ENCODE measurements at regions of chr15 and their contacts with region 1.

Region 1: DNA sequence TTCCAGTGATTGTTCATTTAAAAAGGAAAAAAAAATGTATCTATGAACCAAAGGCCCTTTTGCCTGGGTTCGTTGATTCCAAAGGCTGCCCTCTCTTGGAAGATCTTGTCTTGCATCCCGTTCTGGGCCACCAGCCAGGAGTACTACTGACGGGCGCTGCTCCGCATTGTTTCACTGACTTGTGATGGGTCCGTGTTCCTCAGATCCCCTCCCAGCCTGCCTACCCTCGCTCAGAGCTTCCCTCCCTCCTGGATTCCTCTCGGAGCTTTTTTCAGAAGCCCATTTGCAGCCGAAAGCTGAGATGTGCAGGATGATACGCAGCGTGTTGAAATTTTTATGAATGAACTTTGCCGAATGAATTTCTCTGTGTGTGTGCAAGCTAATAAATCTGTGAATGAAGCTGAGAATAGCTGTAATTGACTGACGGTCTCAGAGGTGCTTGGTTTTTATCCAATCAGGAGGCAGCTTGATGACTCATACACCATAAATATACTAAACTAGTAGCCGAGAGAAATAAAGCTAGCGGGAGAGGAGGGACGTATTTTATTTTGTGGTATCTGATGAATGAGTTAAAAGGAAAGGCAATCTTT is at the start of gene SHC4:
- DNase-seq: peak; percentile 86
- H3K4me3 ChIP-seq: peak within 1 kb of the TSS; percentile 57 to 69 (median 58)
- H3K27ac ChIP-seq: peak within 1 kb of the TSS; percentile 43
- H3K4me1 ChIP-seq: peaks cover 44% of the 10 kb centered on the region
- H3K27me3 ChIP-seq: no peaks in the 10 kb centered on the region
- CTCF ChIP-seq: peak; percentile 6 to 49
- total RNA-seq, gene SHC4: 5.5 to 23.8 TPM

Region 2: DNA sequence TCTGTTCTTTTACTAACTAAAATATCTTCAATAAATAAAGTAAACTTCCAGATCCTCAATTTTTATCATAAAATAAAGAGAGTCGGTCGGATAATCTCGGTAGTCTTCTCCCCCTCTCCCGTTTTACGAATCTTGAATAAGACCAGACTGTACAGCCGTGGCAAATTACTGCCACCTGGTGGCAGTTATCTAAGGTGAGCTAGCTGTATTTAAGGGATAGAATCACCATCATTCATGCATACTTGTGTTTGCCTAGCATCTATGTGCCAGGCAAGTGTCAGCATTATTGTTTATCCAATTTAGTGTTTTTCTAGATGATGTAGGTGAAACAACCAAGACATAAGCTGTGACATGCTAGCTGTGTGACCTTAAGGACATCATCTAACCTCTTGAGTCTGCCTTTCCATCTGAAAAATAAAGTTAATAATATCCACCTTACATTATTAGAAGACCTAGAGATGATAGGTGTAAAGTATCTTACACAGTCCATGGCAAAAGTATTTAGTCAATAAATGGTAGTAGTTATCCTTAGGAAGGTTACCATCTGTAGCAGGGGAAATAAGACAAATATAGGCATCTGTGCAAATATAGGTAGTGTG is 611.0 kb before region 1 on chr15:
- CTCF ChIA-PET with region 1: no interaction called
- dilution Hi-C with region 1: no loop called
- in situ Hi-C with region 1: loop called in 1 of 2 experiments (anchors 25 kb)
- intact Hi-C with region 1: loop called (anchors 5 kb)
- DNase-seq: peak; percentile 47
- H3K4me3 ChIP-seq: no peak overlapping the region
- H3K27ac ChIP-seq: no peak overlapping the region
- H3K4me1 ChIP-seq: no peaks in the 10 kb centered on the region
- H3K27me3 ChIP-seq: no peaks in the 10 kb centered on the region
- CTCF ChIP-seq: peak; percentile 78 to 84

Region 3: DNA sequence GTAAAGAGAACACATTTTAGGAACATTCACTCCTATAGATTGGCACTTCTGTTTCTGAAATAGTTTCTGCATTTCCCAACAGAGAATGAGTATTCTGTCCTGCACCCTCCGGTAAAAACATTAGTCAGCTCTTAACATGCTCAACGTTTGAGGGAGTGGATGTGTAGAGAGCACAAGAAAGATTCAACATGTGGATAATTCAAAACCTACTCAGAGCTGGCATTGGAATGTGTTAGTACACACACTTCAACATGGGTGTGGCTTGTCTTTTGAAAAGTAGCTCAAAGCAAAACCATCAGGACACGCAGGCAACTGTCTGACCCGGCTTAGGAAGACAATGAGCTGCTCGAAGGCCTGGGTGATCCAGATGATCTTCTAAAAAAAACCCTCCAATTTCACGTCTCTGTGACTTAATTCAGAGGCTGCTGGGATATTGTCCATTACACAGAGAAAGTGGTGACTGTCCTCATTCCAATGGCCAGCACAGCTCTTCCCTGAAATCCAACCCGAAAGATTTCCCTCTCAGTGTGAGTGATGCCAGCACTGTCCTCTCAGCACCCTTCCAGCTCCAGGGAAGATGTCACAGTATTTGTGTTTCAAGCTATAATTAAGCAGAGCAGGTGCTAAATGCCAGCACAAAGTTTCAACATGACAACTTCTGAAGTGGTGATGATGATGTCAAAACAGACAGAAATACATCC is 336.2 kb before region 1 on chr15:
- CTCF ChIA-PET with region 1: interaction called, 4 read pairs
- dilution Hi-C with region 1: no loop called
- in situ Hi-C with region 1: no loop called
- intact Hi-C with region 1: loop called (anchors 5 kb)
- DNase-seq: peak; percentile 82
- H3K4me3 ChIP-seq: no peak overlapping the region
- H3K27ac ChIP-seq: peak overlapping the region; percentile 27
- H3K4me1 ChIP-seq: peaks cover 6% of the 10 kb centered on the region
- H3K27me3 ChIP-seq: no peaks in the 10 kb centered on the region
- CTCF ChIP-seq: no peak

Region 4: DNA sequence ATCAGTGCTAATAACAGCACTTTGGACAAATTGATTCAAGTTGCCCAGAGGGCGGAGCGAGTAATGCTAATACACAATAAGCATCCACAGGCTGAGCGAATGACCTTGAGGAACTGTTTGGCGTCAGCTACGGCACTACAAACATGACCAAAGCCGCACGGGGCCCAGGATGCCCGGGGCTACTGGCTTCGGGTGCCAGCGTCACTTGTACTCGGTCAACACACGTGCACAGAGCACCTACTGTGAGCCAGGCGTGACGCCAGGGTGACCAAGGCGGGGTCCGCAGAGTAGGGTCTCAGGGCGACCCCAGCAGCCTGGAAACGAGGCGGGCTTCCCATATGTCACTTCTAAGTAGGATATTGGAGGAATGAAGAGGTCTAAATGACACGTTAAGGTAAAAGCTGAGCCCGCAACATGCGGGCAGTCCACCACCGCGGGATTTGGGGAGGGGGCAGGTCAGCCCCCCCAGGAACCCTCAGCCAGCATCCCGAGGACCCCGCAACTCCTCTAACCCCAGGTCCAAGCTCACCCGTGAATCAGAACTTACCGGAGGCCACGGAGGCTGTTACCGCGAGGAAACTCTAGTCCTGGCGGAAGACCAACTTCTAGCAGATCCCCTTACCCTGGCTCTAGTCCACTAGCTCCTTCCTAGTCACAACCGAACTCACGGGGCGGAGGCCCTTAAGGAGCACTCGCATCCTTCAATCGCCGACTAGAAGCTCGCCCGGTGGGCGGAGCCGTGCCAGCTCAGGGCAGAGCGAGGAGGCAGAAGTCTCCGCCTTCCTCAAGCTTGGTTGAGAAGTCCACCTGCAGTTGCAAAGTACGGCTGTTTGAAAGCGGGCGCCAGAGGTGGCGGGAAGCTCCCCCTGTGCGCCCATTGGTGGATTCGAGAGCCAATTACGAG is 153.0 kb before region 1 on chr15 and contains the start of gene CEP152:
- CTCF ChIA-PET with region 1: no interaction called
- dilution Hi-C with region 1: no loop called
- in situ Hi-C with region 1: no loop called
- intact Hi-C with region 1: loop called (anchors 2 kb)
- DNase-seq: peak; percentile 100
- H3K4me3 ChIP-seq: peak within 1 kb of the TSS; percentile 84 to 93 (median 88)
- H3K27ac ChIP-seq: peak within 1 kb of the TSS; percentile 89
- H3K4me1 ChIP-seq: peaks cover 12% of the 10 kb centered on the region
- H3K27me3 ChIP-seq: no peaks in the 10 kb centered on the region
- CTCF ChIP-seq: no peak
- total RNA-seq, gene CEP152: 2.5 to 9.2 TPM

Region 5: GRCh38 chr15:48877630-48878595 is 85.7 kb before region 1 on chr15 and contains the start of gene EID1:
- CTCF ChIA-PET with region 1: interaction called, 5 read pairs
- dilution Hi-C with region 1: no loop called
- in situ Hi-C with region 1: no loop called
- intact Hi-C with region 1: loop called (anchors 1 kb)
- DNase-seq: peak; percentile 95
- H3K4me3 ChIP-seq: peak within 1 kb of the TSS; percentile 47 to 96 (median 75)
- H3K27ac ChIP-seq: peak within 1 kb of the TSS; percentile 68
- H3K4me1 ChIP-seq: peaks cover 8% of the 10 kb centered on the region
- H3K27me3 ChIP-seq: no peaks in the 10 kb centered on the region
- CTCF ChIP-seq: no peak
- total RNA-seq, gene EID1: 84.6 to 147 TPM

Region 6: GRCh38 chr15:48946088-48946839 is 17.4 kb before region 1 on chr15:
- CTCF ChIA-PET with region 1: no interaction called
- dilution Hi-C with region 1: no loop called
- in situ Hi-C with region 1: no loop called
- intact Hi-C with region 1: loop called (anchors 2 kb)
- DNase-seq: peak; percentile 96
- H3K4me3 ChIP-seq: no peak overlapping the region
- H3K27ac ChIP-seq: peak overlapping the region; percentile 79
- H3K4me1 ChIP-seq: peaks cover 26% of the 10 kb centered on the region
- H3K27me3 ChIP-seq: no peaks in the 10 kb centered on the region
- CTCF ChIP-seq: no peak

Region 7: GRCh38 chr15:49421991-49422390 is 458.4 kb after region 1 on chr15:
- CTCF ChIA-PET with region 1: interaction called, 4 read pairs
- dilution Hi-C with region 1: no loop called
- in situ Hi-C with region 1: no loop called
- intact Hi-C with region 1: loop called (anchors 2 kb)
- DNase-seq: peak; percentile 55
- H3K4me3 ChIP-seq: peak overlapping the region in 1 of 3 experiments; percentile 33
- H3K27ac ChIP-seq: no peak overlapping the region
- H3K4me1 ChIP-seq: no peaks in the 10 kb centered on the region
- H3K27me3 ChIP-seq: peaks cover 3% of the 10 kb centered on the region
- CTCF ChIP-seq: peak; percentile 75 to 85

Measured in mammary epithelial cell (primary cell).